Posterior cingulate gyrus (tissue), 11 donors: ENCODE measurements at regions of chr3 and their contacts with region 1.

Region 1: GRCh38 chr3:12484198-12484974 is at the start of gene TSEN2:
- DNase-seq: peak; percentile 81 to 98 (median 88)

Region 2: DNA sequence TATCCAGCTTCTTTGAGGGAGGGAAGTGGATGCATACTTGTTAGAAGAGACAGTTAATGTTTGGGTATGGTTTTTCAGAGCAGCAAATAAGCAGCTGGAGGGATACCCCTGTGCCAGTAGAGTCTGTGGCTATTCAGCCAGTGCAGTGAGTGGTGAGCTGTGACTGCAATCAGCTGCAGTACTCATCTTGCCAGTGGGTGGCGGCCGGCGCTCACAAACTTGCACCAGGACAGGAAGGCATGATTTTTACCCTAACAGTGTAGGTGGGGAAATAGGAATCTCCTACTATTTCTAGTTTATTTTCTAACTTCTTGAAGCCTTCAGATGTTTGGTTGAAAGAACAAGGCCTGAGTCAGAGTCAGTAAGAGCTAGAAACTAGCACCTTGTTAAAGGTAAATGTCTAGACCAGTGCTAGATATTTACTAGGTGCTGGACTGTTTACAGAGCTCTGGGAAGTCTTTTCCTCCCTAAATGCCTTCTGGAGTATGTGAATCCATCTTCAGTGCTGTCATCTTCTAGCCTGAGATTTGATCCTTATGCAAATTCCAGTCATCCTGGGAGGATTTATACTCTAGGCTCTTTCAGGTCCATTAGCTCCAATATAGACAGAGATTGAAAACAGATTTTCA is 349.2 kb before region 1 on chr3:
- intact Hi-C with region 1: loop called (anchors 1 kb)
- DNase-seq: peak; percentile 59 to 96 (median 78)

Region 3: GRCh38 chr3:12287727-12288191 is 196.6 kb before region 1 on chr3:
- intact Hi-C with region 1: loop called (anchors 10 kb)
- DNase-seq: peak in 2 of 10 donors; percentile 72 to 80

Region 4: GRCh38 chr3:12663936-12664908 is 179.8 kb after region 1 on chr3 and contains the start of gene RAF1:
- intact Hi-C with region 1: loop called (anchors 1 kb)
- DNase-seq: peak; percentile 96 to 100 (median 98)